ENCODE measurements at regions of chr20 and their contacts with region 1.

Region 1: DNA sequence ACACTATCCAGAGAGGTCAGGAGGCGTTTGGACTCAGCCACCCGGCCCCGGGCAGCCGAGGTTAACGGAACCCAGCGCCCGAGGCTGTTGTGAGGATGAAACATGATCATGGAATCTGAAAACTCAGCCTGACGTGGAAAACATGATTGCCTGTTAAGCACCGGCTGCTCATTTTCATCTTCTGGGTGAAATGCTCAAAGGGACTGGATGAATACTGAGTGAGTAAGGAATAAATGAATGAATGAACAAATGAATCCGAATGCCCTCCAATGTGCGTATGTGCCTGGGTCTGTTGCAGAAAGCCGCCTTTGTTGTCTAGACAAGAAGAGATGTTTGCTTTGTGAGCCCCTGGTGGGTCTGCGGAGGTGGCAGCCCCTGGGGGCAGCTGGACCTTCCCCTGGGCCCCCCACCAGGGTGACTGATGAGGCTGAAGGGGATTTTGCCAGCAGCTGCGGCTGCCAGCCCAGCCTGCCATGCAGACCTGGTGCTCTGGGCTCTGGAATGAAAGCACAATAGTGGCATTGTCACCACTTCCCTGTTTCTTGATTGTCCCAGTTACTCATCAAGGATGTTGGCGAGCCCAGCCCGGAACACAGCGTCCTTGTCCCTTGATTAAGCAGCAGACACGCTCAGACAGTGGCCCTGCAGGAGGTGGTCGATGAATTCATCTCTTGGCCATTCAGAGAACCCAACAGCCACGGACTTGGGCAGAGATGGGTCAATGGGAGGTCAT is 211.1 kb downstream of the ANKRD60 start:
- DNase-seq: peak; percentile 98
- ATAC-seq: peak; percentile 88
- H3K4me3 ChIP-seq: peak overlapping the region; percentile 42; the same call in 1 of the 2 replicates
- H3K27ac ChIP-seq: peak overlapping the region; percentile 97
- H3K4me1 ChIP-seq: peaks cover 58% of the 10 kb centered on the region
- H3K27me3 ChIP-seq: no peaks in the 10 kb centered on the region
- CTCF ChIP-seq: no peak

Region 2: GRCh38 chr20:57991211-57991881 is 26.1 kb before region 1 on chr20:
- CTCF ChIA-PET with region 1: no interaction called
- POLR2A ChIA-PET with region 1: no interaction called
- intact Hi-C with region 1: loop called (anchors 2 kb)
- DNase-seq: peak; percentile 97
- ATAC-seq: peak; percentile 84
- H3K4me3 ChIP-seq: no peak overlapping the region
- H3K27ac ChIP-seq: peak overlapping the region; percentile 95
- H3K4me1 ChIP-seq: peaks cover 66% of the 10 kb centered on the region
- H3K27me3 ChIP-seq: no peaks in the 10 kb centered on the region
- CTCF ChIP-seq: no peak

Region 3: DNA sequence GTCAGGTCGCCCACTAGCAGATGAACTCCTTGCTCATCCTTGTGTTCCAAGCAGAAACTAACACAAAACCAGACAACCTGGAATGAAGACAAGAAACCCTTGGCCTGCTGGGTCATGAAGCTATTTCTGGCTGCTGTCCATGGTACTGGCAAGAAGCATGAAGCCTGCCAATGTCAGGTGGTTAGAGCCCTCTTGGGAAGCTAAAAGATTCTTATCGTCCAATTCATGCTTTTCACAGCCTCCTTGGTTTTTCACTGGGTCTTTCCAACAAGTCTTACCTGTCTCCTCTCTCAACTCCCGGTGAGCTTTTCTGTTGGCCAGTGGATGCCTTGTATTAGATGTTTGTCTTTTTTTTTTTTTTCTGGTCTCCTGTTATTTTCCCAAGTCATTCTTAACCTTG is 30.8 kb after region 1 on chr20:
- CTCF ChIA-PET with region 1: no interaction called
- POLR2A ChIA-PET with region 1: no interaction called
- intact Hi-C with region 1: no loop called
- DNase-seq: peak; percentile 75
- ATAC-seq: no peak
- H3K4me3 ChIP-seq: no peak overlapping the region
- H3K27ac ChIP-seq: no peak overlapping the region
- H3K4me1 ChIP-seq: 0 out of 2 replicates have a peak, but pooled peaks cover 4% of the 10 kb centered on the region
- H3K27me3 ChIP-seq: no peaks in the 10 kb centered on the region
- CTCF ChIP-seq: no peak

Region 4: GRCh38 chr20:58102260-58102659 is 84.9 kb after region 1 on chr20:
- CTCF ChIA-PET with region 1: no interaction called
- POLR2A ChIA-PET with region 1: no interaction called
- intact Hi-C with region 1: no loop called
- DNase-seq: no peak
- ATAC-seq: no peak
- H3K4me3 ChIP-seq: no peak overlapping the region
- H3K27ac ChIP-seq: 0 out of 2 replicates have a peak overlapping the region, but pooled peaks have one; percentile 2
- H3K4me1 ChIP-seq: peaks cover 12% of the 10 kb centered on the region
- H3K27me3 ChIP-seq: no peaks in the 10 kb centered on the region
- CTCF ChIP-seq: no peak